B cell (primary cell): ENCODE measurements at regions of chr5 and their contacts with region 1.

Region 1: GRCh38 chr5:157858527-157859226 is at the start of gene CLINT1:
- DNase-seq: peak; percentile 90
- ATAC-seq: peak; percentile 94
- H3K4me3 ChIP-seq: peak within 1 kb of the TSS; percentile 70 to 89 (median 83)
- H3K4me3 Mint-ChIP-seq: peak within 1 kb of the TSS; percentile 89
- H3K27ac ChIP-seq: peak within 1 kb of the TSS; percentile 67 to 86
- H3K27ac Mint-ChIP-seq: peak within 1 kb of the TSS; percentile 96
- H3K4me1 ChIP-seq: peaks cover 23 to 31% of the 10 kb centered on the region in 2 donors
- H3K4me1 Mint-ChIP-seq: peaks cover 64% of the 10 kb centered on the region
- H3K27me3 ChIP-seq: no peaks in the 10 kb centered on the region
- H3K27me3 Mint-ChIP-seq: no peaks in the 10 kb centered on the region
- CTCF ChIP-seq: no peak
- total RNA-seq, gene CLINT1: 62.7 and 69.7 TPM in 2 replicates

Region 2: GRCh38 chr5:157265714-157266285 is 592.9 kb before region 1 on chr5 and contains the start of gene CYFIP2:
- CTCF ChIA-PET with region 1: no interaction called
- POLR2A ChIA-PET with region 1: no interaction called
- intact Hi-C with region 1: loop called (anchors 10 kb)
- DNase-seq: peak; percentile 89
- ATAC-seq: peak; percentile 89
- H3K4me3 ChIP-seq: peak within 1 kb of the TSS; percentile 62 to 85 (median 73)
- H3K4me3 Mint-ChIP-seq: peak within 1 kb of the TSS; percentile 99
- H3K27ac ChIP-seq: peak within 1 kb of the TSS; percentile 99
- H3K27ac Mint-ChIP-seq: peak within 1 kb of the TSS; percentile 99
- H3K4me1 ChIP-seq: peaks cover 65 to 69% of the 10 kb centered on the region in 2 donors
- H3K4me1 Mint-ChIP-seq: peaks cover 70% of the 10 kb centered on the region
- H3K27me3 ChIP-seq: no peaks in the 10 kb centered on the region
- H3K27me3 Mint-ChIP-seq: no peaks in the 10 kb centered on the region
- CTCF ChIP-seq: no peak
- total RNA-seq, gene CYFIP2: 663 and 681 TPM in 2 replicates

Region 3: DNA sequence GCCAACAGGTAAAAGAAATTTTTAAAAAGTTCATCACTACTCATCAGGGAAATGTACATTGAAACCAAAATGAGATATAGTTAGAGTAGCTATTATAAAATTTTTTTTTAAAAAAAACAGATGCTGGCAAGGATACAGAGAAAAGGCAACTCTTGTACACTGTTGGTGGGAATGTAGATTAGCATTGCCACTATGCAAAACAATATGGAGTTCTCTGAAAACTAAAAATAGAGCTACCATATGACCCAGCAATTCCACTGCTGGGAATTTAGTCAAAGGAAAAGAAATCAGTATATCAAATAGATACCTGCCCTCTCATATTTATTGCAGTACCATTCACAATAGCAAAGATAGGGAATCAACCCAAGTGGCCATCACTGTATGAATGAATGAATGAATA is 442.8 kb before region 1 on chr5:
- CTCF ChIA-PET with region 1: no interaction called
- POLR2A ChIA-PET with region 1: no interaction called
- intact Hi-C with region 1: no loop called
- DNase-seq: no peak
- ATAC-seq: no peak
- H3K4me3 ChIP-seq: no peak overlapping the region
- H3K4me3 Mint-ChIP-seq: no peak overlapping the region
- H3K27ac ChIP-seq: no peak overlapping the region
- H3K27ac Mint-ChIP-seq: no peak overlapping the region
- H3K4me1 ChIP-seq: no peaks in the 10 kb centered on the region
- H3K4me1 Mint-ChIP-seq: no peaks in the 10 kb centered on the region
- H3K27me3 ChIP-seq: no peaks in the 10 kb centered on the region
- H3K27me3 Mint-ChIP-seq: no peaks in the 10 kb centered on the region
- CTCF ChIP-seq: no peak

Region 4: DNA sequence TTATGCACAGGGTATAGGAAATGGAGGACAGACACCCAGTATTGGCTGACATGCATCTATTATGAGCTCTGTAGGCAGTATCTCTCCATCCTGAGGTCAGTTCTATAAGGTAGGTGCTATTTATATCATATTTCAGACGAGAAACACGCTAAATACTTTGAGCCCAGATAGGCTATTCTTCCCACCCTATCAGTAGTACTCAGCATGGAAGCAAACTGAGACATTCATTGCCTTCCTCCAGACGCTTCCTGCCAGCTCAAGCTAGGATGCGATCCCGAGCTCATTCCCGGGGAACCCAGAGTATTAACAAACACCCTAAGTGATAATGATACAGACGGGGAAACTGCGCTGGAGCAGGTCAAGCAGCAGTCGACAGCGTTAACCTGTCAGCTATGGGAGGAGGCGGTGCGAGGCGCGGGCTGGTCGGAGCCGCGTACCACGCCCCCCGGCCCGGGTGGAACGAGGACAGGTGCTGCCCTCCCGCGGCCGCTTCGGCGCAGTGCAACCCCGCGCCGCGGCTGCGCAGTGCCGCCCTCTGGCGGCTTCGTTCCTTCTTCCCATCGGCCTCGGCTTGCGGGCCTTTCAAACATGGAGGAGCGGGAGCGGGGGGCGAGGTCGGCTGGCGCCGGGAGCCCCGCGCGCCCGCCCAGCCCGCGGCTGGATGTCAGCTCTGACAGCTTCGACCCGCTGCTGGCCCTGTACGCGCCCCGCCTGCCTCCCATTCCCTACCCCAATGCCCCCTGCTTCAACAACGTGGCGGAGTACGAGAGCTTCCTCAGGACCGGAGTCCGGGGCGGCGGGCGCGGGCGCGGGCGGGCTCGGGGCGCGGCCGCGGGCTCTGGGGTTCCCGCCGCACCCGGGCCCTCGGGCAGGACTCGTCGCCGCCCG is 115.3 kb before region 1 on chr5 and contains the start of gene LSM11:
- CTCF ChIA-PET with region 1: no interaction called
- POLR2A ChIA-PET with region 1: no interaction called
- intact Hi-C with region 1: no loop called
- DNase-seq: peak; percentile 95
- ATAC-seq: peak; percentile 96
- H3K4me3 ChIP-seq: peak within 1 kb of the TSS; percentile 42 to 81 (median 70)
- H3K4me3 Mint-ChIP-seq: peak within 1 kb of the TSS; percentile 94
- H3K27ac ChIP-seq: peak within 1 kb of the TSS in 1 of 2 donors; percentile 29
- H3K27ac Mint-ChIP-seq: peak within 1 kb of the TSS; percentile 87
- H3K4me1 ChIP-seq: peaks cover 12 to 13% of the 10 kb centered on the region in 2 donors
- H3K4me1 Mint-ChIP-seq: peaks cover 24% of the 10 kb centered on the region
- H3K27me3 ChIP-seq: no peaks in the 10 kb centered on the region
- H3K27me3 Mint-ChIP-seq: no peaks in the 10 kb centered on the region
- CTCF ChIP-seq: peak; percentile 99
- total RNA-seq, gene LSM11: 4.2 and 4.3 TPM in 2 replicates

Region 5: DNA sequence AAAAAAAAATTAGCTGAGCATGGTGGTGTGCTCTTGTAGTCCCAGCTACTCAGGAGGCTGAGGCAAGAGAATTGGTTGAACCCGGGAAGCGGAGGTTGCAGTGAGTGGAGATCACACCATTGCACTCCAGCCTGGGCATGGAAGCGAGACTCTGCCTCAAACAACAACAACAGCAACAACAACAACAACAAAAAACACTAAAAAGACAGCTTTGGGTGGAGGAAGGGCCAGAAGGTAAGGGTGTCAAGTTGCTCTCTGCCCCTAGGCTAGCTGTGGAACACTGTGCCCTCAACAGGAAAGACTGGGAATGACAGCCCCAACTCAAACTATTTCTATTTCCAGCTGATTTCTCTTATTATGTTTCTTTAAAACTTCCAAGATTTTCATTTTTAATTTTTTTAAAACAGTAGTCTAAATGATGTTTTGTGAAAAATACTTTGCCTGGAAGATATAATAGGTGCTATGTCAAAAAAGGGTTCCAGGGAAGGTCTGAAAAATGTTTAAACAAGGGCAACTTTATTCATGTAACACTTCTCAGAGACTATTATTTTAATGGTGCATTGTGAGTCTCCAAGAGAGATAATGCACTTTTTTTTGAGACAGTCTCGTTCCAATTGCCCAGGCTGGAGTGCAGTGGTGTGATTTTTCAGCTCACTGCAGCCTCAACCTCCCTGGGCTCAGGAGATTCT is 29.6 kb before region 1 on chr5:
- CTCF ChIA-PET with region 1: interaction called, 3 read pairs
- POLR2A ChIA-PET with region 1: no interaction called
- intact Hi-C with region 1: loop called (anchors 2 kb)
- DNase-seq: no peak
- ATAC-seq: peak; percentile 28
- H3K4me3 ChIP-seq: no peak overlapping the region
- H3K4me3 Mint-ChIP-seq: peak overlapping the region; percentile 29
- H3K27ac ChIP-seq: no peak overlapping the region
- H3K27ac Mint-ChIP-seq: peak overlapping the region; percentile 33
- H3K4me1 ChIP-seq: peaks cover 24 to 51% of the 10 kb centered on the region in 2 donors
- H3K4me1 Mint-ChIP-seq: peaks cover 61% of the 10 kb centered on the region
- H3K27me3 ChIP-seq: no peaks in the 10 kb centered on the region
- H3K27me3 Mint-ChIP-seq: no peaks in the 10 kb centered on the region
- CTCF ChIP-seq: no peak

Region 6: DNA sequence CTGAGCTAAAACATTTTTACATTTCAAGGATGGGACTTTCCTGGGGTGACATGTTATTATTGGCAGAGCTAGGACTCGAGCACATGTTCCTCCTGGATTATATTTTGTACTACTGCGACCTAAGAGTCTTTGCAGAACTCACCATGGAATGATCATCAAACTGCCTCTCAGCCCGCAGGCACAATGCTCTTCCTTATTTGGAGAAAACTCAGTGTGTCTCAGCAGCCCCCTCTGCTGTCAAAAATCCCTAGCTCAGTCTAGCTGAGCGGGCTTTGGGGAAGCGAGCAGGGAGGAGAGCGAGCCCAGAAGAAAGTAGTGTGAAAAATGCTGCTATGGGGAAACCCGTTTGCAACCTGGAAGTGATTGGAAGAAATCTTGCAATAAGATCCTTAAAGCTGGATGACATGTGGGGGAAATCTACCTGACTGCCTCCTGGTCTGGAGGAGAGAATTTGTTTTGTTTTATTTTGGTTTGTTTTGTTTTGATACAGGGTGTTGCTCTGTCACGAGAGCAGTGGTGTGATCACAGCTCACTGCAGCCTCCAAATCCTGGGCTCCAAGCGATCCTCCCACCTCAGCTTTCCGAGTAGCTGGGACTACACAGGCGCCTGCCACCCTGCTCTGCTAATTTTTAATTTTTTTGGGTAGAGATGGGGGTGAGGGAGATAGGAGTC is 90.2 kb after region 1 on chr5:
- CTCF ChIA-PET with region 1: interaction called, 38 read pairs
- POLR2A ChIA-PET with region 1: no interaction called
- intact Hi-C with region 1: no loop called
- DNase-seq: peak; percentile 89
- ATAC-seq: peak; percentile 98
- H3K4me3 ChIP-seq: no peak overlapping the region
- H3K4me3 Mint-ChIP-seq: peak overlapping the region; percentile 33
- H3K27ac ChIP-seq: no peak overlapping the region
- H3K27ac Mint-ChIP-seq: no peak overlapping the region
- H3K4me1 ChIP-seq: peaks cover 6 to 8% of the 10 kb centered on the region in 2 donors
- H3K4me1 Mint-ChIP-seq: peaks cover 5% of the 10 kb centered on the region
- H3K27me3 ChIP-seq: peaks cover 0 to 4% (median 0%) of the 10 kb centered on the region in 4 experiments
- H3K27me3 Mint-ChIP-seq: peaks cover 18% of the 10 kb centered on the region
- CTCF ChIP-seq: peak; percentile 87

Region 7: GRCh38 chr5:158718738-158719505 is 860.2 kb after region 1 on chr5:
- CTCF ChIA-PET with region 1: no interaction called
- POLR2A ChIA-PET with region 1: no interaction called
- intact Hi-C with region 1: no loop called
- DNase-seq: no peak
- ATAC-seq: no peak
- H3K4me3 ChIP-seq: no peak overlapping the region
- H3K4me3 Mint-ChIP-seq: no peak overlapping the region
- H3K27ac ChIP-seq: no peak overlapping the region
- H3K27ac Mint-ChIP-seq: no peak overlapping the region
- H3K4me1 ChIP-seq: peaks cover 5% of the 10 kb centered on the region in 2 donors
- H3K4me1 Mint-ChIP-seq: peaks cover 21% of the 10 kb centered on the region
- H3K27me3 ChIP-seq: no peaks in the 10 kb centered on the region
- H3K27me3 Mint-ChIP-seq: no peaks in the 10 kb centered on the region
- CTCF ChIP-seq: no peak

Region 8: DNA sequence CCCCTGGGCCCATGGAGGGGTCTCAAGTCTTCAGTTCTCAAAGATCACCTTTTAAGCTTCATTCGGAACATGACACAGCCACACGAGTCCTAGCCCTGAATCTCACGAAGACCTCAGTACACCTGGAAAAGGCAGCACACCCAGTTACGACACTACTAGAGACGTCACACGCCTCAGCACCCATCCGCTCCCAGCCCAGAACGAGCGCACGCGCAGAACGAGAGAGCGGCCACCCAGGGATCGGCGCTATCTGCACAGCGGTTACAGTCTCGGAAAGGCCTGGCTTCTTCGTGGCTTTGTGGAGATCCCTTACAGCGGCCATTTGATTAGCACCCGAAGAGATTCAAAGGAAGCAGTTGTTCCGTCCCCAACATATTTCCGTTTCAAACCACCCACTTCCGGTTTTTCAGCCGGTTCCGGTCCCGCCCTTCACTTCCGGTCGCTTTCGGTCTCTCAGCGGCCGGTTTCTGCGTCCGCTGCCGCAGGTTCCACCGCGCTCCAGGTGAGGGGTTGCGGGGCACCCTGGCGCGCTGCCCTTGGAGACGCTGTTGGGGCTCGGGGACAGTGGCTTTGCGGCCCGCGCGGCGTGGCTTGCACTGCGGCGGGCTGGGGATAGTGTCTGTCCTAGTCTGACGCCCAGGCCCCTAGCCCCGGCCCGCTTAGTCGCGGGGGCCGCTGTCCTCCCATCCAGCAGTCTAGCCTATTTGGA is 1404.3 kb after region 1 on chr5 and contains the start of gene UBLCP1:
- CTCF ChIA-PET with region 1: no interaction called
- POLR2A ChIA-PET with region 1: no interaction called
- intact Hi-C with region 1: loop called (anchors 2 kb)
- DNase-seq: peak; percentile 94
- ATAC-seq: peak; percentile 82
- H3K4me3 ChIP-seq: peak within 1 kb of the TSS; percentile 84 to 96 (median 95)
- H3K4me3 Mint-ChIP-seq: peak within 1 kb of the TSS; percentile 96
- H3K27ac ChIP-seq: peak within 1 kb of the TSS; percentile 87 to 88
- H3K27ac Mint-ChIP-seq: peak within 1 kb of the TSS; percentile 97
- H3K4me1 ChIP-seq: peaks cover 17 to 18% of the 10 kb centered on the region in 2 donors
- H3K4me1 Mint-ChIP-seq: peaks cover 32% of the 10 kb centered on the region
- H3K27me3 ChIP-seq: no peaks in the 10 kb centered on the region
- H3K27me3 Mint-ChIP-seq: no peaks in the 10 kb centered on the region
- CTCF ChIP-seq: no peak
- total RNA-seq, gene UBLCP1: 25.1 and 25.5 TPM in 2 replicates